ENCODE measurements at regions of chr17 and their contacts with region 1.

Region 1: GRCh38 chr17:63697341-63698286 is 2.3 kb downstream of the LIMD2 start:
- DNase-seq: peak; percentile 90
- ATAC-seq: no peak

Region 2: DNA sequence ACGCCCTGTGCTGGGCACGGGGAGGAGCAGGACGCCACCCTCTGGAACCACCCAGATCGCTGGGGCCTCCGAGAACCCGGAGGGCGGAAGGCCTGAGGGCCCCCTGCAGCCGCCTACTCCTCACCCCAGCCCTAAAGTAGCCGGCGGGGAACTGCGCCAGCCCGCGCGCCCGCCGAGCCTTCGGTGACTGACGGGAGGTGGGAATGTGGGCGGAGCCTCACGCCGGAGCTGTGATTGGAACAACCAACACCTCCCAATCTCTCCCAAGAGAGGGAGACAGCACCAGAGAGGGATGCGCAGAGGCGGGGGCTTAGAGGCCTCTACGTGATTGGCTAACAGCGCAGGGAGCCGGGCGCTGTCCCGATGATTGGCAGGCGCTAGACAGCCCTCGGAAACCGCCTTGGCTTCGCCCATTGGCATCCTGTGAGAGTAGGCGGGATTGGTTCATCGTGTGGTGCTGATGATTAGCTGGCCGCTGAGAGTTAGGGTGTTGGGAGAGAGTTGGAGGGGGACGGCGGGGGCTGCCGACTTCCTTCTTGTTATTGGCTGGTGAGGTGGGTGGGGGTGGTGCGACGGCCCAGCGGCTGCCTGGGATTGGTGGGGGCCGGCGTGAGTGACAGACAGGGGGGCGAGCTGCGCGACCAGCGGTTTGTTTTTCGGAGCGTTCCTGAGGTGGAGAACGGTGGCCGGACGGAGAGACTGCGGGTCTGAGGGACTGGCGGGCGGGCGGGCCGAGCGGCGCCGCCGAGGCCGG is 75.7 kb before region 1 on chr17 and contains the start of gene MAP3K3:
- intact Hi-C with region 1: loop called (anchors 5 kb)
- DNase-seq: peak; percentile 99
- ATAC-seq: peak; percentile 97
- total RNA-seq, gene MAP3K3: 38.4 TPM

Region 3: GRCh38 chr17:63881876-63882601 is 184.4 kb after region 1 on chr17 and contains the start of gene GH2:
- intact Hi-C with region 1: no loop called
- DNase-seq: no peak
- ATAC-seq: peak; percentile 49
- total RNA-seq, gene GH2: not detected